ENCODE measurements at regions of chr16 and their contacts with region 1.

Region 1: DNA sequence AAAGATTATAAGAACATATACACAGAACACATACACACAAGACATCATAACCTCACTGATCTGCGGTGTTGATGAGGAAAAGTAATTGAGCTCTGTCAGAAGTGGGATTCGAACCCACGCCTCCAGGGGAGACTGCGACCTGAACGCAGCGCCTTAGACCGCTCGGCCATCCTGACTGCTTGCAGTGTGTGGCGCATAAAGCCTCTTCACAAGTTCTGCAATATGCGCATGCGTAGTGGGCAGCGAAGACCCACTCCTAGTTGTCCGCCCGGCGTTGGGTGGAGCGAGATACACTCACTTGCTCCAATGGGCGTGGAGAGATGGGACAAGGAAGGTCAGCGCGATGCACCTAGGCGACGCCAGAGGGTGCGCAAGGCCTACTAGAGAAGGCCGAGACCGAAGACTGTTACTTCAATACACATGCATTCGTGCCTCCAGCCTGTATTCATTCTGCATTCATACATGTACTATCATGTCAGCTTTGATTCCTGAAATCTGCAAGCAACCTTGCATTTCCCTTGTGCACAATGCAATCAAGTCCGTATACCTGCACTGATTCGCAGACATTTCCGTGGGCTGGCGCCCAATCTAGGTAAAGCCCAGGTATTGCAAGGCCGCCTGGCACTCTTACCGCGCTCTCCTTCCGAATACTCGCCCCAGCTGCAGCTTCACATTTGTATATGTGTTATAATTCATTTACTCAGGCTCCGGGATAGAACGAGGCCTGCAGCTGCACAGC is 16.1 kb upstream of the PLLP start:
- DNase-seq: peak; percentile 97
- H3K4me3 ChIP-seq: peak overlapping the region; percentile 25 to 47 (median 40)
- H3K27ac ChIP-seq: no peak overlapping the region
- H3K4me1 ChIP-seq: peaks cover 10% of the 10 kb centered on the region
- H3K27me3 ChIP-seq: no peaks in the 10 kb centered on the region
- CTCF ChIP-seq: peak; percentile 97 to 99

Region 2: GRCh38 chr16:57071831-57072582 is 228.5 kb before region 1 on chr16:
- CTCF ChIA-PET with region 1: no interaction called
- dilution Hi-C with region 1: no loop called
- in situ Hi-C with region 1: no loop called
- intact Hi-C with region 1: no loop called
- DNase-seq: peak; percentile 83
- H3K4me3 ChIP-seq: no peak overlapping the region
- H3K27ac ChIP-seq: no peak overlapping the region
- H3K4me1 ChIP-seq: peaks cover 10% of the 10 kb centered on the region
- H3K27me3 ChIP-seq: no peaks in the 10 kb centered on the region
- CTCF ChIP-seq: no peak

Region 3: GRCh38 chr16:57231821-57232350 is 68.7 kb before region 1 on chr16:
- CTCF ChIA-PET with region 1: no interaction called
- dilution Hi-C with region 1: no loop called
- in situ Hi-C with region 1: no loop called
- intact Hi-C with region 1: no loop called
- DNase-seq: no peak
- H3K4me3 ChIP-seq: no peak overlapping the region
- H3K27ac ChIP-seq: no peak overlapping the region
- H3K4me1 ChIP-seq: peaks cover 1% of the 10 kb centered on the region
- H3K27me3 ChIP-seq: no peaks in the 10 kb centered on the region
- CTCF ChIP-seq: no peak

Region 4: DNA sequence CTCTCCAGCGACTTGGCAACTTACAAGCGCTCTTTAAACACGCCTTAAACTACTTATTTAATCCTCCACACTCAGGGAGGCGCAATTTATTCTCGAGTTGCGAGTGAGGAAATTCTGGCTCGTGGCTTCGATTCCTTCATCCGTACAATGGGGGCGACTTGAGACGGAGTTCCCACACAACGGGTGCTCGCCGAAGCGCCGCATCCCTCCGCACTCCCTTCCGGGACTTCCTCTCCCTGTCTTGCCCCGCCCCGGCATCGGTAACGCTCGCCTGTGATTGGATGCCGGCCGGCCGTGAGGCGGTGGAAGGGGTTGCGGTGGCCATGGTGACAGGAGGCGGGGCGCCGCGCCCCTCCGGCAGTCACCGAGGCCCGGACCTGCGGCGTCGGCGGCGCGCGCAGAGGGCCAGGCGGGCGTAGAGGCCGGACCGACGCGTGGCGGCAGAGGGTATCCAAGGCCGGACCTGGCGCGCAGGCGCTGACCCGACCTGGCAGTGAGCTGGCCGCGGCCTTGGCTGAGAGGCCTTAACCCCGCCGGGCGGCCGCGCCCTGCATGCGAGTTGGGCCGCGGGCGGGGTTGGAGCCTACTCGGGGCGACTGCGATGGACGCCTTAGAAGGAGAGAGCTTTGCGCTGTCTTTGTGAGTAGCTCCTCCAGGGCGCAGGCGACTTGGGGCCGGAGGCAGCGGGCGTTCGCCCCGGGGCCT is 55.6 kb before region 1 on chr16 and contains the start of gene ARL2BP:
- CTCF ChIA-PET with region 1: no interaction called
- dilution Hi-C with region 1: no loop called
- in situ Hi-C with region 1: no loop called
- intact Hi-C with region 1: loop called (anchors 1 kb)
- DNase-seq: peak; percentile 98
- H3K4me3 ChIP-seq: peak within 1 kb of the TSS; percentile 73 to 77 (median 76)
- H3K27ac ChIP-seq: peak within 1 kb of the TSS; percentile 73
- H3K4me1 ChIP-seq: peaks cover 11% of the 10 kb centered on the region
- H3K27me3 ChIP-seq: no peaks in the 10 kb centered on the region
- CTCF ChIP-seq: peak in 1 of 2 donors; percentile 14
- total RNA-seq, gene ARL2BP: 70.2 to 82.4 TPM

Region 5: DNA sequence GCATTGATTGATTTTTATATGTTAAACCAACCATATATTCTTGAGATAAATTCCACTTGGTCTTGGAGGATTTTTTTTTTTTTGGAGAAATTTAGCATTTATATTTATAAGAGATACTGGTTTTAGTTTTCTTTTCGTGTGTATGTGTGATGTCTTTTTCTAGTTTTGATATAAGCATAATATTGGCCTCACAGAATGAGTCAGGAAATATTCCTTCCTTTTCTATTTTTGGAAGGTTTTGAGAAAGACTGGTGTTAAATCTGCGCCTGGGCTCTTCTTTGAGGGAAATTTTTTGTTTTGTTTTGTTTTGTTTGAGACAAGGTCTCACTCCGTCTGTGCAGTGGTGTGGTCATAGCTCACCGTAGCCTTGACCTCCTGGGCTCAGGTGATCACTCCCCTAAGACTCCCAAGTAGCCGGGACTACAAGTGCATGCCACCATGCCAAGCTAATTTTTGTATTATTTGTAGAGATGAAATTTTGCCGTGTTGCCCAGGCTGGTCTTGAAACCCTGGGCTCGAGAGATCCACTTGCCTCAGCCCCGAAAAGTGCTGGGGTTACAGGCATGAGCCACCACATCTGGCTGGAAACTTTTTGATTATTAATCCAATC is 29.3 kb after region 1 on chr16:
- CTCF ChIA-PET with region 1: no interaction called
- dilution Hi-C with region 1: no loop called
- in situ Hi-C with region 1: no loop called
- intact Hi-C with region 1: no loop called
- DNase-seq: no peak
- H3K4me3 ChIP-seq: no peak overlapping the region
- H3K27ac ChIP-seq: no peak overlapping the region
- H3K4me1 ChIP-seq: no peaks in the 10 kb centered on the region
- H3K27me3 ChIP-seq: no peaks in the 10 kb centered on the region
- CTCF ChIP-seq: no peak

Region 6: GRCh38 chr16:57341441-57342303 is 41.1 kb after region 1 on chr16:
- CTCF ChIA-PET with region 1: no interaction called
- dilution Hi-C with region 1: loop called (anchors 10 kb)
- in situ Hi-C with region 1: no loop called
- intact Hi-C with region 1: loop called (anchors 2 kb)
- DNase-seq: peak; percentile 100
- H3K4me3 ChIP-seq: no peak overlapping the region
- H3K27ac ChIP-seq: peak overlapping the region; percentile 50
- H3K4me1 ChIP-seq: peaks cover 28% of the 10 kb centered on the region
- H3K27me3 ChIP-seq: no peaks in the 10 kb centered on the region
- CTCF ChIP-seq: no peak

Region 7: GRCh38 chr16:57416122-57416509 is 115.6 kb after region 1 on chr16:
- CTCF ChIA-PET with region 1: interaction called, 21 read pairs
- dilution Hi-C with region 1: loop called (anchors 5 kb)
- in situ Hi-C with region 1: loop called (anchors 5 kb)
- intact Hi-C with region 1: loop called (anchors 1 kb)
- DNase-seq: no peak
- H3K4me3 ChIP-seq: no peak overlapping the region
- H3K27ac ChIP-seq: no peak overlapping the region
- H3K4me1 ChIP-seq: peaks cover 17% of the 10 kb centered on the region
- H3K27me3 ChIP-seq: no peaks in the 10 kb centered on the region
- CTCF ChIP-seq: no peak

Region 8: GRCh38 chr16:57462209-57462977 is 161.8 kb after region 1 on chr16 and contains the start of gene POLR2C:
- CTCF ChIA-PET with region 1: no interaction called
- dilution Hi-C with region 1: no loop called
- in situ Hi-C with region 1: no loop called
- intact Hi-C with region 1: loop called (anchors 1 kb)
- DNase-seq: peak; percentile 75
- H3K4me3 ChIP-seq: peak within 1 kb of the TSS; percentile 55 to 94 (median 88)
- H3K27ac ChIP-seq: peak within 1 kb of the TSS; percentile 35
- H3K4me1 ChIP-seq: peaks cover 5% of the 10 kb centered on the region
- H3K27me3 ChIP-seq: no peaks in the 10 kb centered on the region
- CTCF ChIP-seq: peak; percentile 84 to 89
- total RNA-seq, gene POLR2C: 45.1 to 82.2 TPM

Region 9: GRCh38 chr16:57519796-57520360 is 219.3 kb after region 1 on chr16:
- CTCF ChIA-PET with region 1: no interaction called
- dilution Hi-C with region 1: no loop called
- in situ Hi-C with region 1: loop called (anchors 5 to 10 kb)
- intact Hi-C with region 1: loop called (anchors 1 kb)
- DNase-seq: peak; percentile 20
- H3K4me3 ChIP-seq: no peak overlapping the region
- H3K27ac ChIP-seq: no peak overlapping the region
- H3K4me1 ChIP-seq: no peaks in the 10 kb centered on the region
- H3K27me3 ChIP-seq: no peaks in the 10 kb centered on the region
- CTCF ChIP-seq: peak; percentile 93 to 98

Measured in mammary epithelial cell (primary cell).